PC-3 (cell line): ENCODE measurements at regions of chr15 and their contacts with region 1.

Region 1: GRCh38 chr15:89071466-89071865 is 16.8 kb upstream of the ABHD2 start:
- DNase-seq: no peak
- ATAC-seq: no peak
- H3K4me3 ChIP-seq: no peak overlapping the region
- H3K27ac ChIP-seq: no peak overlapping the region
- H3K4me1 ChIP-seq: no peaks in the 10 kb centered on the region
- H3K27me3 ChIP-seq: no peaks in the 10 kb centered on the region
- CTCF ChIP-seq: no peak

Region 2: DNA sequence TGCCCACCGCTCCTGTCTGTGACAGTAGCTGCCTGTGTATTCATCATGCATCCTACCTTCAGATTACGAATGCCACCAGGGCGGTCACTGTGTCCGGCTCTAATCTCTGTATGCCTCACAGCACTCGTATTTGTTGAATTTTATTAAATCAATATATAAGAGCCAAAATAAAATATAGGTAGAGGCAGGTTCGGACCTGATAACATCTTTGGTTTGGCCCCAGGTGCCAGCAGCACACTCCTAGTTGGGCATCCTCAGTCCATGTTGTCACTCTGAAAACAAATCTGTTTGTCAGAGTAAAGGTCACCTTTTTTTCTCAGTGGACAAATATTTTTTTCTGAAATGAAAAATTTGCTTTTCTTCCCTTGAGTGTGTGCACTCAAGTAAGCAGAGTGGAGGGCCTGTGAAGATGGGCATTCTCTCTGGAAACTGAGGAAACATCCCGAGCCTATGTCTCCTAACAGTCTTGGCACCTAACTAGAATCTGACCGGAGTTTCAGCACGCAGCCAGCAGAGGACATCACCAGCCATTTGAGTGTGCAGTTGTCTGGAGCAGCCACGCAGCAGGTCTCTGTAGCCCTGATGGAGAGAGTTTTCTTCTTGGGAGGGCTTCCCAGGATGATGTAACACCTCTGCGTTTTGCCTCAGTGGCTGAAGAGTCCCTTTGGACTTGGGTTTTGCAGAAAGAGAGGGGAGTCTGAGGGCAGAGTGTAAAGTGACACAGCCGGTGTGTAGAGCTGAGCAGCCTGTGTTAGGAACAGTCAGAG is 68.1 kb after region 1 on chr15:
- CTCF ChIA-PET with region 1: no interaction called
- POLR2A ChIA-PET with region 1: interaction called, 11 read pairs
- intact Hi-C with region 1: no loop called
- DNase-seq: no peak
- ATAC-seq: 0 out of 2 replicates have a peak, but pooled peaks have one; percentile 18
- H3K4me3 ChIP-seq: no peak overlapping the region
- H3K27ac ChIP-seq: no peak overlapping the region
- H3K4me1 ChIP-seq: peaks cover 16% of the 10 kb centered on the region
- H3K27me3 ChIP-seq: no peaks in the 10 kb centered on the region
- CTCF ChIP-seq: no peak